IMR-90 (cell line): ENCODE measurements at regions of chr1 and their contacts with region 1.

Region 1: GRCh38 chr1:165928075-165928731 is 100.8 kb downstream of the UCK2 start:
- DNase-seq: peak; percentile 56
- ATAC-seq: peak; percentile 53; the same call in 1 of the 2 replicates
- H3K4me3 ChIP-seq: no peak overlapping the region
- H3K27ac ChIP-seq: no peak overlapping the region
- H3K4me1 ChIP-seq: no peaks in the 10 kb centered on the region
- H3K27me3 ChIP-seq: no peaks in the 10 kb centered on the region; the same call in 1 of the 2 replicates
- CTCF ChIP-seq: peak; percentile 74
- POLR2A ChIP-seq: no peak
- RAD21 ChIP-seq: peak; percentile 57

Region 2: GRCh38 chr1:164765557-164765956 is 1162.6 kb before region 1 on chr1:
- CTCF ChIA-PET with region 1: no interaction called
- POLR2A ChIA-PET with region 1: no interaction called
- dilution Hi-C with region 1: no loop called
- in situ Hi-C with region 1: no loop called
- intact Hi-C with region 1: no loop called
- DNase-seq: peak; percentile 93
- ATAC-seq: peak; percentile 52
- H3K4me3 ChIP-seq: no peak overlapping the region
- H3K27ac ChIP-seq: peak overlapping the region; percentile 38
- H3K4me1 ChIP-seq: peaks cover 26% of the 10 kb centered on the region
- H3K27me3 ChIP-seq: no peaks in the 10 kb centered on the region
- CTCF ChIP-seq: no peak
- POLR2A ChIP-seq: 0 out of 2 replicates have a peak, but pooled peaks have one; percentile 36
- RAD21 ChIP-seq: no peak

Region 3: DNA sequence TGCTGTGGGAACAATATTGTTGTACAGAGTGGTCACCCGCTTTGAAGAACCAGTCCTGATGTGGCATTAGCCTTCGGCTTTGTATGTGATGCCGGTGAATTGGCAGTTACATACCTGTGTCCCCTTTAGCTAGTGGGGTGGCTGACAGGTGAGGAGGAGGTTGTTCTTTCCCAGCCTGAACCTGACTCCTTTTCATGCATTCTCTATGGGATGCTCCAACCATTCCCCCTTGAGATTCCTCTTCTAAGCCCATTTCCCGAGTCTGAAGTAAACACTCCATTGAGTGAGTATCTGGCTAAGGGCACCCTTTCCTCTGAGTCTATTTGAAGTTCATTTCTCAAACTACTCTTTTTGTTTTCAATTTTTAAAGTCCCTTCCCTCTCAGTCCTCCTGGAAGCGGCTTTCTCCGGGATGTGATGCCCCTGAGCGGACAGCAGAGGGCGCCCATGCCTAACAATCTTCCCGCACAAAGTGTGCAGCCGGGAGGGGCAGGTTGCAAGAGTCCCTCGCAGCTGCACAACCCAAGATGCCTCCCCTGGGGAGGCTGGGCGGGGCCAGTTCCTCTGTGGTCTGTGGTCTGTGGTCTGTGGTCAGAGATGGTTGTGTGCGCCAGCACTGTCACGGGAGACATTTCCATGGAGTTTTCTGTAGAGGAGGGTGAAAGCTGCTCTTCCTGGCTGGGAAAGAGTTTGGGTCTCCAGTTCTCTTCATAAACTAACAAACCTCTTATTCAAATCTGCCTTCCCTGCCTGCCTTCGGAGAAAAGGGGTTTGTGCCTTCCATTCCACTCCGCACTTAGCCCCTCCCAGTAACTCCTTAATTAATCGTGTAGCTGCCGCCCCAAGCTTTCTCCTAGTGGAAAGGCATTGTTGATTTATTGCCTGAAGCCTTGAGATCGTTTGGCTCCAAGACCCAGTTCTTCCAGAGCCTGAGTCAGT is 535.3 kb before region 1 on chr1:
- CTCF ChIA-PET with region 1: no interaction called
- POLR2A ChIA-PET with region 1: no interaction called
- dilution Hi-C with region 1: no loop called
- in situ Hi-C with region 1: loop called (anchors 25 kb)
- intact Hi-C with region 1: no loop called
- DNase-seq: peak; percentile 82
- ATAC-seq: peak; percentile 99
- H3K4me3 ChIP-seq: no peak overlapping the region
- H3K27ac ChIP-seq: no peak overlapping the region
- H3K4me1 ChIP-seq: no peaks in the 10 kb centered on the region
- H3K27me3 ChIP-seq: peaks cover 17% of the 10 kb centered on the region
- CTCF ChIP-seq: peak; percentile 88
- POLR2A ChIP-seq: no peak
- RAD21 ChIP-seq: peak; percentile 81

Region 4: DNA sequence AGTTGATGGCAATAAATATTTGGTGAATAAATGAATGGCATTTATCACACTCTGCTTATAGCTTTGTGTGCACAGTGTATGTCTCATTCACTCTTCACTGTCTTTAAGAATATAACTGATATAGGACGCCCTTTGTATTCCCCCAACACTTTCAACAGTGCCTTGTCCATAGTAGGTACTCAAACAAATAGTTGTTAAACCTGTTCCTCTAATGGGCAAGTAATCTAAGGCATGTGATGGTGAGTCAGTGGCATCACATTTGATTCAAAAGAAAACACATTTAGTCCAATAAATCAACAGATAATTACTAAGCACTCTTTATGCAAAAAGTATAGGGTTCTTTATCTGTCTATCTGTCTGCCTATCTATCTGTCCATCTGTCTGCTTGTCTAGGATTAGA is 472.1 kb before region 1 on chr1:
- CTCF ChIA-PET with region 1: no interaction called
- POLR2A ChIA-PET with region 1: no interaction called
- dilution Hi-C with region 1: no loop called
- in situ Hi-C with region 1: no loop called
- intact Hi-C with region 1: no loop called
- DNase-seq: no peak
- ATAC-seq: no peak
- H3K4me3 ChIP-seq: no peak overlapping the region
- H3K27ac ChIP-seq: no peak overlapping the region
- H3K4me1 ChIP-seq: no peaks in the 10 kb centered on the region
- H3K27me3 ChIP-seq: no peaks in the 10 kb centered on the region
- CTCF ChIP-seq: no peak
- POLR2A ChIP-seq: no peak
- RAD21 ChIP-seq: no peak

Region 5: DNA sequence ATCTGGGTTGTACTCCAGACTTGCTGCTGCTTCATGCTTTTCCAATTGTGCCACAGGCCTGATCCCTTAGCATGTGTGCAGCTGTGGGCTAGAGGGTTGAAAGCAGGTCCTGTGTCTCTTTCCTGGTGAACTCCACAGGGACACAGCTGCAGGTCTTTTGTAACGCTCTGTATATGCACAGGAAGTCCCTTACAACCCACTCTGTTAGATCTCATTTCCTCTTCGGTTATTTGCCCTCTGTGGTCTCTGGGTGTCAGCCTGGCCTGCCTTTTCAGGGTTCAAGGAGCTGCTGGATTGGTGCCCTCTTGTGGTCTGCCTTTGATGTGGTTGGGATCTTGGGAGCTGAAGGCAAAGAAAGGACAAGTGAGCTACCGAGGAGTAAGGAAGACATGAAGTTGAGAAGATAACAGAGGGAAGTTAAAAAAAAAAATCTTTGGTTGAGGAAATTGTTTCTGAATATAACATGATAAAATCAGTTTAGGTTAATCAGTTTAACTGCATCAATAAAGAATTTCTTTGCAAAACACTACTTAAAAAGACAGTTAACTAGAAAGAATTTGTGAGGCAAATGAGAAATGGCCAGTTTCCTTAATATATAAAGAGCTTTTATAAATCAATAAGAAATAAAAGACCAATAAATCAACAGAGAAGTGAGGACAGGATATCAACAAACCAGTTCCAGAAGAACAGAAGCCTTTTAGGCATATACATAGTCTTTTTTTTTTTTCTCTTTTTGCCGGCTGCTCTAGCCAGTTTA is 56.7 kb before region 1 on chr1:
- CTCF ChIA-PET with region 1: no interaction called
- POLR2A ChIA-PET with region 1: no interaction called
- dilution Hi-C with region 1: no loop called
- in situ Hi-C with region 1: no loop called
- intact Hi-C with region 1: no loop called
- DNase-seq: peak; percentile 54
- ATAC-seq: peak; percentile 49
- H3K4me3 ChIP-seq: no peak overlapping the region
- H3K27ac ChIP-seq: no peak overlapping the region
- H3K4me1 ChIP-seq: no peaks in the 10 kb centered on the region
- H3K27me3 ChIP-seq: no peaks in the 10 kb centered on the region
- CTCF ChIP-seq: peak; percentile 30; the same call in 1 of the 2 replicates
- POLR2A ChIP-seq: no peak
- RAD21 ChIP-seq: peak; percentile 14; the same call in 1 of the 2 replicates

Region 6: DNA sequence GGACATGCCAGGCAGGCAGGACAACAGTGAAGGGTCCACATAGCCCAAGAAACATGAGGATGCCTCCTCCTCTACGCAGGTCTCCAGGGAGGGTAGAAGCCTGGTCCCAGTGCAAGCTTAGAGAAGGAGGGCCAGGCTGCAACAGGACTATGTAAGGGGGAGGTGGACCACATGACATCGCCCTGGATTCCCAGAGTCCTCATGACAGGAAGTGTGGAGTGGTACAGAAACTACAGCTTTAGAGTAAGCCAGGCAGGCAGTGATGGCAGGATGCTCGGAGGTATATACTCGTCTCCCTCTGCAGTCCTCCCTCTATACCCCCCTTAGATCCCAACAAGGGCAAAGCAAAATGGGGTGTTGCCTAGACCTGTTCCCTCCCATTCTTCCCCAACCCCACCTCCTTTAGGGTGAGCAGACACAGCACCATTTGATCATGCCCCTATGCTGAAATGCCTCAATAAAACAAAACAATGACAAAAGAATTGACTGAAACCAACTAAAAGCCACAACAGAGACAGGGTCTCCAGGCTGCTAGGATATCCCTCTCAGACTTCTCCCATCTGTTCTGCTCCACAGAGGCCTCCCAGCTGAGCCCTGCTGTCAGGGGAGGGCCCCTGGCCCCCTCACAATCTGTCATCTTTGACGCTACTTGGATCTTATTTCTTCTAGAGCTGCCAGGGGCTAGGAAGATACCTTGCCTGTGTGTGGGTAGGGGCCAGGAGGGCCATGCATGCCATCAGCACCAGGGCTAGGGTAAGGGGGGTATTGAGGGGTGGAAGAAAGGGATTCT is 225.5 kb after region 1 on chr1:
- CTCF ChIA-PET with region 1: no interaction called
- POLR2A ChIA-PET with region 1: no interaction called
- dilution Hi-C with region 1: no loop called
- in situ Hi-C with region 1: no loop called
- intact Hi-C with region 1: no loop called
- DNase-seq: no peak
- ATAC-seq: no peak
- H3K4me3 ChIP-seq: no peak overlapping the region
- H3K27ac ChIP-seq: no peak overlapping the region
- H3K4me1 ChIP-seq: no peaks in the 10 kb centered on the region
- H3K27me3 ChIP-seq: no peaks in the 10 kb centered on the region
- CTCF ChIP-seq: no peak
- POLR2A ChIP-seq: no peak
- RAD21 ChIP-seq: no peak

Region 7: GRCh38 chr1:166166695-166167571 is 238.7 kb after region 1 on chr1 and contains the start of gene FAM78B:
- CTCF ChIA-PET with region 1: no interaction called
- POLR2A ChIA-PET with region 1: no interaction called
- dilution Hi-C with region 1: no loop called
- in situ Hi-C with region 1: no loop called
- intact Hi-C with region 1: loop called (anchors 5 kb)
- DNase-seq: peak; percentile 7
- ATAC-seq: peak; percentile 65
- H3K4me3 ChIP-seq: peak within 1 kb of the TSS; percentile 83
- H3K27ac ChIP-seq: no peak within 1 kb of the TSS
- H3K4me1 ChIP-seq: no peaks in the 10 kb centered on the region
- H3K27me3 ChIP-seq: peaks cover 13% of the 10 kb centered on the region
- CTCF ChIP-seq: no peak
- POLR2A ChIP-seq: no peak
- RAD21 ChIP-seq: no peak
- total RNA-seq, gene FAM78B: under 0.01 and 0.28 TPM in 2 replicates

Region 8: GRCh38 chr1:166479052-166479631 is 550.9 kb after region 1 on chr1:
- CTCF ChIA-PET with region 1: interaction called, 32 read pairs
- POLR2A ChIA-PET with region 1: no interaction called
- dilution Hi-C with region 1: no loop called
- in situ Hi-C with region 1: loop called (anchors 5 kb)
- intact Hi-C with region 1: loop called (anchors 1 kb)
- DNase-seq: peak; percentile 18
- ATAC-seq: peak; percentile 44; the same call in 1 of the 2 replicates
- H3K4me3 ChIP-seq: no peak overlapping the region
- H3K27ac ChIP-seq: no peak overlapping the region
- H3K4me1 ChIP-seq: no peaks in the 10 kb centered on the region
- H3K27me3 ChIP-seq: no peaks in the 10 kb centered on the region
- CTCF ChIP-seq: peak; percentile 62
- POLR2A ChIP-seq: no peak
- RAD21 ChIP-seq: peak; percentile 55

Region 9: DNA sequence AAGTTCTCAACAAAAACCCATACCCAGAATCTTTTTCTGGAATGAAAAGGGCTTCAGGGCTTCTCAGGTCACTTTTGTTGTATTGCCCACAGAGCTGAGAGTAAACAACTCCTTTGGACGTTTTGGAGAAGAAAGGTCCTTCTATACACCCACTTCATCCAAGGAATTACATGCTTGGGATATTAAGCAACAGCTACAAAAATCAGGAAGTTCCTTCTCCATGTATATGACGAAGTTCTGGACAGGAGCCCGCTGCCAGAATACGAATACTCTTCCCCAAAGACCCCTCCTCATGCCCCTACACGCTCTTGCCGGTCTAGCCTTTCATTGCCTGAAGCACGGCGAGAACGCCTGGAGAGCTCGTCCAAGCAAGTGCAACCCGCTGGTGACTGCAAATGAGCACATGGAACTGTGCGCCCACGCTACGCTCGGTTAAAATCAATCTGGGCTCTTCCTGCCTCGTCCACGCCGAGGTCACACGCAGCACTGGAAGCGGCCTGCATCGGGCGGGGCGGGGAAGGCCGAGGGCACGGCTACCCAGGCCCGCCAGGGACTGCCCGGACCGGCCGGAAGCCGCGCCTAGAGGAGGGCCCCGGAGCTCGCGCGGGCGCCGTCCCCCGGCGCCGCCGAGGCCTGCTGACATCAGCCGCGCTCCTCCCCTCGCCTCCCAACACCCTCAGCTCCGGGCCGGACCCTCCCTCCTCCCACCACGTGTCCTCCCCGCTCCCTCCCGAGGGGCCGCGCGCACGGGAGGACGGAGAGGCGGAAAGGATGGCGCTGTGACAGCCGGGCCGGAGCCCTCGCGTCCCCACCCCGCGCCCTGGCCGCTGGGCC is 910.8 kb after region 1 on chr1 and contains the start of gene POGK:
- CTCF ChIA-PET with region 1: no interaction called
- POLR2A ChIA-PET with region 1: no interaction called
- dilution Hi-C with region 1: no loop called
- in situ Hi-C with region 1: no loop called
- intact Hi-C with region 1: loop called (anchors 10 kb)
- DNase-seq: peak; percentile 88
- ATAC-seq: peak; percentile 97
- H3K4me3 ChIP-seq: peak within 1 kb of the TSS; percentile 80
- H3K27ac ChIP-seq: peak within 1 kb of the TSS; percentile 99
- H3K4me1 ChIP-seq: peaks cover 11% of the 10 kb centered on the region
- H3K27me3 ChIP-seq: peaks cover under 1% of the 10 kb centered on the region
- CTCF ChIP-seq: 0 out of 2 replicates have a peak, but pooled peaks have one; percentile 9
- POLR2A ChIP-seq: peak; percentile 79
- RAD21 ChIP-seq: no peak; the same call in 1 of the 2 replicates
- total RNA-seq, gene POGK: 25.6 and 33.1 TPM in 2 replicates

Region 10: GRCh38 chr1:167059045-167059808 is 1131.0 kb after region 1 on chr1:
- CTCF ChIA-PET with region 1: interaction called, 5 read pairs
- POLR2A ChIA-PET with region 1: no interaction called
- dilution Hi-C with region 1: no loop called
- in situ Hi-C with region 1: no loop called
- intact Hi-C with region 1: loop called (anchors 1 kb)
- DNase-seq: peak; percentile 45
- ATAC-seq: peak; percentile 92
- H3K4me3 ChIP-seq: no peak overlapping the region
- H3K27ac ChIP-seq: no peak overlapping the region
- H3K4me1 ChIP-seq: no peaks in the 10 kb centered on the region
- H3K27me3 ChIP-seq: no peaks in the 10 kb centered on the region
- CTCF ChIP-seq: peak; percentile 90
- POLR2A ChIP-seq: no peak
- RAD21 ChIP-seq: peak; percentile 76